ENCODE measurements at regions of chr12 and their contacts with region 1.

Region 1: DNA sequence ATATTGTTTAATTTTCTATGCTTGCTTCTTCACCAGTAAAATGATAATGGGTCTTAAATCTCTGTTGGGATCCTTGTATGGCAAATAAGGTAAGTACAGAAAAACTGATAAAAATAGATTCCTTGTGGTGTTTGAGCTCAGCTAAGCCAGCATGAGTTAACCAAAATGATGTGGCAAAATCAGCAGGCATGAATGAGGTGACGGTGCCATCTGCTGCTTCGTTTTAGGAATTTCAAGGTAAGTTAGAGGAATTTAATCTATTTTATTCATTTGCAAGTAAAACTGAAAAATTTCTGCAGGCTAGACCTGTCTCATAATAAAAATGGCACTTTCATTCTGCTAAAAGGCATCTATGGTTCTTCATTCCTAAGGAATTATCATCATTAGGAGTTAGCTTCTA is 10.0 kb upstream of the CLEC7A start:
- DNase-seq: peak; percentile 54
- H3K4me3 Mint-ChIP-seq: no peak overlapping the region
- H3K27ac Mint-ChIP-seq: no peak overlapping the region
- H3K4me1 Mint-ChIP-seq: no peaks in the 10 kb centered on the region
- H3K27me3 Mint-ChIP-seq: no peaks in the 10 kb centered on the region
- CTCF ChIP-seq: peak; percentile 40

Region 2: DNA sequence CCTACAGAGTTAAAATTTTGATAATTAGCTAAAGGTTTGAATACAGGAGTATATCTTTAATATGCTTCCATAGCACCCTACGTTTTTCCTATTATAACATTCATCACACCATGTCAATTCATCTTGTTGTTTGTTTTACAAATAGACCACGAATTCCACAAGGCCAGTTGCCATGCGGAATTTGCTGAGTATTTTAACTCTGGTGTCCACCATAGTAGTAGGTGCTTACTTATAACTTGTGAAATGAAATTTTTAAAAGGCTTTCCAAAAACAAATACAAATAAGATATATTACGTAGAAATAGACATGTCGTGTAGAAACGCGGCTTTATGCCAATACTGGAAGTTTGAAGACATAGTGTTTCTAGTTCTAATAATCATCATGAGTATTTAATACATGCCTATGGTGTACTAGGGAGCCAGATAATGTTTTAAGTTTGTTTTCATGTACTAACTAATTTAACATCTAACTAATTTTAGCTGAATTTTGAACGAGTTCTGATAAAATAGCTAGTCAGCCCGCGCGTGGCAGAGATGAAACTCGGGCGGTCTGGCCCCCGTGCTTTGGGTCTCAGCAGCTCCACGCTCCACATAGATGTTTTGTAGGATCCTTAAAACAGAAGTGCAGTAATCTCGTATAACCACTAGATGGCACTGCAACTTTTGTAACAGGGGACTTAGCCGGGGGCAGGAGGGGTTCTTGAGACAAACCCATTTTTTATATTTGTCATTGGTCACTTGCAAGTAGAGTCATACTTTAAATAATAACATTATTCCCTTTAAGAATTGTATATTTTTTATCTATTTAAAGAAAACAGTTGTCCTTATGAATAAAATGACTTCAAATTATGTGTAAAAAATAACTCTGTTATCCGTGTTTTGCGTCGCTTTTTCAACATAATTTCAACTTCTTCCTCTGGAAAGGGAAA is 389.5 kb before region 1 on chr12:
- CTCF ChIA-PET with region 1: interaction called, 4 read pairs
- intact Hi-C with region 1: loop called (anchors 1 kb)
- DNase-seq: peak; percentile 55
- H3K4me3 Mint-ChIP-seq: no peak overlapping the region
- H3K27ac Mint-ChIP-seq: no peak overlapping the region
- H3K4me1 Mint-ChIP-seq: no peaks in the 10 kb centered on the region
- H3K27me3 Mint-ChIP-seq: no peaks in the 10 kb centered on the region
- CTCF ChIP-seq: peak; percentile 73

Region 3: GRCh38 chr12:9813821-9814809 is 325.9 kb before region 1 on chr12:
- CTCF ChIA-PET with region 1: interaction called, 3 read pairs
- intact Hi-C with region 1: loop called (anchors 1 kb)
- DNase-seq: peak; percentile 91
- H3K4me3 Mint-ChIP-seq: peak overlapping the region; percentile 71
- H3K27ac Mint-ChIP-seq: no peak overlapping the region
- H3K4me1 Mint-ChIP-seq: no peaks in the 10 kb centered on the region
- H3K27me3 Mint-ChIP-seq: peaks cover 26% of the 10 kb centered on the region
- CTCF ChIP-seq: peak; percentile 86

Region 4: GRCh38 chr12:9922429-9922828 is 217.6 kb before region 1 on chr12:
- CTCF ChIA-PET with region 1: no interaction called
- intact Hi-C with region 1: no loop called
- DNase-seq: no peak
- H3K4me3 Mint-ChIP-seq: no peak overlapping the region
- H3K27ac Mint-ChIP-seq: no peak overlapping the region
- H3K4me1 Mint-ChIP-seq: no peaks in the 10 kb centered on the region
- H3K27me3 Mint-ChIP-seq: peaks cover 33% of the 10 kb centered on the region
- CTCF ChIP-seq: no peak

Region 5: DNA sequence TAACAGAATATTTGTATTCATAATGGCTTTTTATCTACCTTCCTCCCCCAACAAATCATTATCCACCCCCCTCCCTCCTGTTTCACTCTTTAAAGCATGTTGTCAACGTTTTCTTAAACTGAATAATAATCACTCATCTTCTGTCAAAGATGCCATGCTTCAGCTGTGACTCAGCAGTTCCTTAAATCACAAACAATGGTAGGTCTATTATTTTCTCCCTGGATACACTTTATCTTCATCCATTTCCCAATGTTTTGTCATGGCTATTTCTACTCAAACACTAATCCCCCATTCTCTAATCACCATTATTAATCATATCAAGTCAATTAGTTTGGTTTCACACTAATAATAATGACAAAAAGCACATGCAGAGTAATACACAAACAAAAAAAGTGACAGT is 123.1 kb before region 1 on chr12:
- CTCF ChIA-PET with region 1: no interaction called
- intact Hi-C with region 1: loop called (anchors 5 kb)
- DNase-seq: no peak
- H3K4me3 Mint-ChIP-seq: no peak overlapping the region
- H3K27ac Mint-ChIP-seq: peak overlapping the region; percentile 8
- H3K4me1 Mint-ChIP-seq: peaks cover 20% of the 10 kb centered on the region
- H3K27me3 Mint-ChIP-seq: no peaks in the 10 kb centered on the region
- CTCF ChIP-seq: no peak

Region 6: GRCh38 chr12:10033783-10034545 is 106.0 kb before region 1 on chr12:
- CTCF ChIA-PET with region 1: interaction called, 4 read pairs
- intact Hi-C with region 1: loop called (anchors 1 kb)
- DNase-seq: no peak
- H3K4me3 Mint-ChIP-seq: no peak overlapping the region
- H3K27ac Mint-ChIP-seq: no peak overlapping the region
- H3K4me1 Mint-ChIP-seq: no peaks in the 10 kb centered on the region
- H3K27me3 Mint-ChIP-seq: no peaks in the 10 kb centered on the region
- CTCF ChIP-seq: no peak